ENCODE measurements at regions of chr4 and their contacts with region 1.

Region 1: DNA sequence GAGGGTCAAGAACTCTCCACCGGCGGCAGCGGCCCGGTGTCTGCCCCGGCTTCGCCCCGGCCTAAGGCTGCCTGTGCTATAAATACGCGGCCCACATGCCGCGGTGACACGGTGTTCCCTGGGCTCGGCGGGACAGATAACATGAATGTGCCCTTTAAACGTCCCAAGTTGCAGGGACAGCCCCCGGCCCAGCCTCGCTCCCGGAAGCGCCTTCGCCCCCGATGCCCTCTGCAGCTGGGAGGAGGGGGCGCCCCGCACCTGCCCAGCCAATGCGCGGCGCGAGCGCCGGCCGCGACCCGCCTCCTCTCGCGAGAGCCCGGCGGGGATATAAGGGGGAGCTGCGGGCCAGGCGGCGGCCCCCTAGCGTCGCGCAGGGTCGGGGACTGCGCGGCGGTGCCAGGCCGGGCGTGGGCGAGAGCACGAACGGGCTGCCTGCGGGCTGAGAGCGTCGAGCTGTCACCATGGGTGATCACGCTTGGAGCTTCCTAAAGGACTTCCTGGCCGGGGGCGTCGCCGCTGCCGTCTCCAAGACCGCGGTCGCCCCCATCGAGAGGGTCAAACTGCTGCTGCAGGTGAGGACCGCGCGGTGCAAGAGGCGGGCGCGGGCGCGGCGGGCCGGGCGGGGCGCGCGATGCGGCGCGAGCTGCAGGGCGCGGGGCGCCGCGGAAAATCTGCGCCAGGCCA is at the start of gene SLC25A4:
- DNase-seq: peak; percentile 90
- H3K4me3 Mint-ChIP-seq: peak within 1 kb of the TSS; percentile 80
- H3K27ac Mint-ChIP-seq: no peak within 1 kb of the TSS
- H3K4me1 Mint-ChIP-seq: peaks cover 13% of the 10 kb centered on the region
- H3K27me3 Mint-ChIP-seq: peaks cover 25% of the 10 kb centered on the region
- total RNA-seq, gene SLC25A4: 7.7 to 8.4 TPM

Region 2: GRCh38 chr4:185066179-185066578 is 76.9 kb before region 1 on chr4:
- CTCF ChIA-PET with region 1: no interaction called
- POLR2A ChIA-PET with region 1: no interaction called
- intact Hi-C with region 1: no loop called
- DNase-seq: no peak
- H3K4me3 Mint-ChIP-seq: no peak overlapping the region
- H3K27ac Mint-ChIP-seq: no peak overlapping the region
- H3K4me1 Mint-ChIP-seq: no peaks in the 10 kb centered on the region
- H3K27me3 Mint-ChIP-seq: peaks cover 6% of the 10 kb centered on the region

Region 3: GRCh38 chr4:185165605-185166063 is 22.6 kb after region 1 on chr4:
- CTCF ChIA-PET with region 1: interaction called, 3 read pairs
- POLR2A ChIA-PET with region 1: interaction called, 6 read pairs
- intact Hi-C with region 1: loop called (anchors 1 kb)
- DNase-seq: no peak
- H3K4me3 Mint-ChIP-seq: no peak overlapping the region
- H3K27ac Mint-ChIP-seq: no peak overlapping the region
- H3K4me1 Mint-ChIP-seq: peaks cover 20% of the 10 kb centered on the region
- H3K27me3 Mint-ChIP-seq: no peaks in the 10 kb centered on the region

Measured in activated CD4-positive, alpha-beta memory T cell treated with anti-CD3 and anti-CD28 coated beads for 36 hours (primary cell).